ENCODE measurements at regions of chr6 and their contacts with region 1.

Region 1: GRCh38 chr6:111483736-111484632 is 966 bp upstream of the REV3L start:
- DNase-seq: peak; percentile 95
- ATAC-seq: peak; percentile 84 to 92

Region 2: GRCh38 chr6:111565326-111566221 is 81.6 kb after region 1 on chr6:
- intact Hi-C with region 1: loop called in 1 of 2 experiments (anchors 10 kb)
- DNase-seq: no peak
- ATAC-seq: no peak

Region 3: GRCh38 chr6:111605100-111605751 is 121.2 kb after region 1 on chr6:
- intact Hi-C with region 1: loop called (anchors 2 to 10 kb)
- DNase-seq: peak; percentile 83
- ATAC-seq: peak; percentile 62 to 78

Measured in left cardiac atrium (tissue), 4 donors.